ENCODE measurements at regions of chr6 and their contacts with region 1.

Region 1: GRCh38 chr6:150079604-150080003 is 10.7 kb upstream of the ULBP3 start:
- DNase-seq: no peak
- ATAC-seq: no peak
- H3K4me3 ChIP-seq: no peak overlapping the region
- H3K27ac ChIP-seq: no peak overlapping the region
- H3K4me1 ChIP-seq: no peaks in the 10 kb centered on the region
- H3K27me3 ChIP-seq: no peaks in the 10 kb centered on the region
- CTCF ChIP-seq: no peak
- POLR2A ChIP-seq: no peak

Region 2: DNA sequence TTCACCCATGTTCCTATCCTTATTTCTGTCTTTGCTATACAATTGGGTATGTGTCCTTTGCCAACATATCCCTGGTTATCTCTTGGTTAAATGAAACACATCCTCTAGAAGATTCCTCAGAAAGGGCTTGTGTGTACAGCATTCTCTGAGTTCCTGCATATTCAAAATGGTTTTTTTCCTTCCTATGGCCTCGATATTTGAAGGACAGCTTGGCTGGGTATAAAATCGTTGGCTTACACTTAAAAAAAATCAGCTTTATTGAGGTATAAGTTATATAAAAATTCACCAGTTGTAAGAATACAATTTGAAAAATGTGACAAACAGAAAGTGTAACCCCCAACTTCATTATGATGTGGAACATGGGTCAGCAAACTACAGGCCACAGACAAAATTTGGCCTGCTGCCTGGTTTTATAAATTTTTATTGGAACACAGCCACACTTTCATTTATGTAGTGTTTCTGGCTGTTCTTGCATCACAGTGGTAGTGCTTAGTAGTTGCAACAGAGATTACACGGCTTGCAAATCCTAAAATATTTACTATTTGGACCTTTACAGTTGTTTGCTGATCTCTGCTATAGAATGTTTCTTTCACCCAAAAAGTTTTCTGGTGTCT is 313.3 kb before region 1 on chr6:
- intact Hi-C with region 1: no loop called
- DNase-seq: peak in 1 of 4 donors; percentile 22
- ATAC-seq: no peak
- H3K4me3 ChIP-seq: no peak overlapping the region
- H3K27ac ChIP-seq: no peak overlapping the region
- H3K4me1 ChIP-seq: peaks cover 11% of the 10 kb centered on the region
- H3K27me3 ChIP-seq: no peaks in the 10 kb centered on the region
- CTCF ChIP-seq: no peak
- POLR2A ChIP-seq: no peak

Region 3: DNA sequence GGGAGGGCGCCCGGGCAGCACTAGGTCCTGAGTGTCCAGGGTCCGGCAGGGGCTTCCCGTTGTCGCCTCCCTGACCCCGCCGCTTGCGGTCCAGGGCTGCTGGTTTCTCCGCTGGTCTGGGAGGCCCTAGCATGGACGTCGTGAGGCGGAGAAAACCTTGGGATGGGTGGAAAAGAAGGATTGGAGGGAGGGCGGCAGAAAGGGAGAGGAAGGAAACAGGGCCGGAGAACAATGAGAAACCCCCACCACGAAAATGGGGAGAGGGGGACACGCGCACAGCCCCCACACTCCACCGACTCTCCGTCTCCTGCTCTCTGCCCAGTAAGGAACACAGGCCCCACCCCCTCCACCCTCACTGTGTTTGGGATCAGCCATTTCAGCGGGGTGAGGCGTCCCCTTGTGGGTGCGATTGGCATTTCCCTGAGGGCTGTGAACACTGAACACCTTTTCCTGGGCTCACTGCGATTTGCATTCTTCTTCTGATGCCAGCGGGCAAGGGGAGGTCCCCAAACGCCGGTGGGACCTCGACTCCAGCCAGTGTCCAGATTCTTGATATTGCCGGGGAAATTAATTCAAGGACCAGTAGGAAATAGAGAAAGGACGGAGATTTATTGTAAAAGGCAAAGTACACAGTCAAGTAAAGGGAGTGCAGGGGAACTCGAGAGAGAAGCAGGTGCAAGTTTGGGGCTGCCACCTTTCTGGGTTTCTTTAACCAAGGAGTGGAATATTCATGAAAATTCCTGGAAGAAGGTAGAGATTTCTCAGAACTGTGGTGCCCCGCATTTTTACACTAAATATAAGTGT is 153.4 kb before region 1 on chr6:
- intact Hi-C with region 1: no loop called
- DNase-seq: peak; percentile 90 to 95 (median 92)
- ATAC-seq: peak; percentile 91
- H3K4me3 ChIP-seq: peak overlapping the region; percentile 16 to 24
- H3K27ac ChIP-seq: peak overlapping the region in 1 of 4 donors; percentile 12
- H3K4me1 ChIP-seq: peaks cover 27% of the 10 kb centered on the region
- H3K27me3 ChIP-seq: no peaks in the 10 kb centered on the region
- CTCF ChIP-seq: peak; percentile 89 to 99 (median 98)
- POLR2A ChIP-seq: no peak

Region 4: GRCh38 chr6:150334790-150335783 is 255.5 kb after region 1 on chr6:
- intact Hi-C with region 1: loop called (anchors 5 kb)
- DNase-seq: peak; percentile 49 to 63 (median 58)
- ATAC-seq: peak; percentile 45
- H3K4me3 ChIP-seq: no peak overlapping the region
- H3K27ac ChIP-seq: no peak overlapping the region
- H3K4me1 ChIP-seq: no peaks in the 10 kb centered on the region
- H3K27me3 ChIP-seq: no peaks in the 10 kb centered on the region
- CTCF ChIP-seq: peak; percentile 70 to 83 (median 82)
- POLR2A ChIP-seq: no peak

Region 5: GRCh38 chr6:150395398-150396009 is 315.9 kb after region 1 on chr6:
- intact Hi-C with region 1: loop called (anchors 10 kb)
- DNase-seq: peak; percentile 47 to 68 (median 62)
- ATAC-seq: peak; percentile 72
- H3K4me3 ChIP-seq: no peak overlapping the region
- H3K27ac ChIP-seq: no peak overlapping the region
- H3K4me1 ChIP-seq: peaks cover 7% of the 10 kb centered on the region
- H3K27me3 ChIP-seq: no peaks in the 10 kb centered on the region
- CTCF ChIP-seq: peak; percentile 47 to 78 (median 67)
- POLR2A ChIP-seq: no peak